CD4-positive, alpha-beta memory T cell (primary cell): ENCODE measurements at regions of chr1 and their contacts with region 1.

Region 1: DNA sequence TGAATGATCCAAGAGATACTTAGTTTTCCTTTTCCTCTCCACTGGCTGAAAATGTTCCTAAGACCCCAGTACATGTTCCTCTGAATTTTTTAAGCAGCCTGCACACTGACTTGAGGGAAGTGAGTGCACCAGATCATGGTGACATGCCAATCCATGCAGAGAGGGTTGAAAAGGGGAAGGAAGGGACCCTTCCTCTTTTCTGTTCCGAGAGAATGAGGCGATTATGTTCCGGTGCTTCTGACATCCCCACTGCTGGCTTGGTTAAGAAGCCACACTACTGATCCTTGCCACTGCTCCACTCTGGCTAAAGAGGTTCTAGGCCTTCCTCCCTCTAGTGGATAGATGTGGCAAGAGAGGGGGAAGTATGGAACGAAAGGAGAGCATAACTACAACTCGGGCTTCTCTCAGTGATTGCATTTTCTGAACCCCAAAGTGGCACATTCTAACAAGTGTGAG is 1.8 kb upstream of the CYB5R1 start:
- DNase-seq: peak; percentile 21 to 59 (median 29)
- H3K4me3 ChIP-seq: no peak overlapping the region
- H3K4me3 Mint-ChIP-seq: peak overlapping the region in 5 of 8 donors; percentile 9 to 68 (median 35)
- H3K27ac ChIP-seq: peak overlapping the region; percentile 52
- H3K27ac Mint-ChIP-seq: peak overlapping the region; percentile 3 to 87 (median 75)
- H3K4me1 ChIP-seq: peaks cover 29% of the 10 kb centered on the region
- H3K4me1 Mint-ChIP-seq: peaks cover 14 to 36% (median 22%) of the 10 kb centered on the region in 4 donors
- H3K27me3 ChIP-seq: no peaks in the 10 kb centered on the region
- H3K27me3 Mint-ChIP-seq: no peaks in the 10 kb centered on the region

Region 2: DNA sequence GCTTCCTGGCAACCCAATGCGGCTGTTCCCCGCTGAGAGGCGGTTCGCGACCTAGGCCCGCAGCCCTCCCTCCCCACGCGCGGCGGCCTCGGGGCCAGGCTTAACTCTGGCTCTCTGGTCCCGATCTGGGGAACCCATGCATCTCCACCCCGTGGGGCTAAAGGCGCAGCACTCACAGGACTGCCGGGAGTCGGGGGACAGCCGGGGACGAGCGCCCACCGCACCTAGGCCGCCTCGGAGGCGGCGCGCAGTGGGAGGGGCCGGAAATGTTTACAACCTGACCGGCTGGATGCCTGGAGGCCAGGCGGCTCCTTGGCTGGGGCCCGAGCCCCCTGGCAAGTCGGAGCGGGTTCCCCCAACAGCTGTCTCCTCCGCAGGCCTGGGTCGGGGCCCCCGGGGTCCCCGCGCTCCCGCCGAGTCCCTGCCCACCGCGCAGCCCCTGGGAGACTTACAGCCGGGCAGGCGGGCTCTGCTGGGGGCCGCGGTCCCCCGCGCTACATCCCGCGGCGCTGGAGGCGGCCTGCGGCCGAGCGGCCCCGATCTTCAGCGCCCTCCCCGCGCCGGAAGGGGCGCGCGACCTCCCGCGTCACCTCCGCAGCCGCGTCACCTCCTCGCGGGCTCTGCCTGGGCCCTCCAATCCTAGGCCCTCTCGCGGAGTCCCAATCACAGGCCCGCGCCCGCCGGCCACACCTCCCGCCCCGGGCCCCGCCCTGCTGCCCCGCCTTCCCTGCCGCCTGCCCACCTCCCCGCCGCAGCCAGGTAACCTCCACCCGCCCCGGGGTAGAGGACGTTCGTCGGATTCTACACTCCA is 10.9 kb before region 1 on chr1 and contains the start of gene ADIPOR1:
- CTCF ChIA-PET with region 1: interaction called, 9 read pairs
- POLR2A ChIA-PET with region 1: interaction called, 6 read pairs
- intact Hi-C with region 1: loop called (anchors 1 kb)
- DNase-seq: peak; percentile 93 to 94 (median 94)
- H3K4me3 ChIP-seq: peak within 1 kb of the TSS; percentile 44 to 78
- H3K4me3 Mint-ChIP-seq: peak within 1 kb of the TSS; percentile 89 to 97 (median 94)
- H3K27ac ChIP-seq: peak within 1 kb of the TSS; percentile 94
- H3K27ac Mint-ChIP-seq: peak within 1 kb of the TSS; percentile 91 to 99 (median 97)
- H3K4me1 ChIP-seq: peaks cover 54% of the 10 kb centered on the region
- H3K4me1 Mint-ChIP-seq: peaks cover 30 to 55% (median 47%) of the 10 kb centered on the region in 4 donors
- H3K27me3 ChIP-seq: no peaks in the 10 kb centered on the region
- H3K27me3 Mint-ChIP-seq: no peaks in the 10 kb centered on the region
- total RNA-seq, gene ADIPOR1: 52.6 to 58.3 TPM

Region 3: GRCh38 chr1:202998836-202999750 is 30.2 kb after region 1 on chr1:
- CTCF ChIA-PET with region 1: interaction called, 12 read pairs
- POLR2A ChIA-PET with region 1: no interaction called
- intact Hi-C with region 1: loop called (anchors 2 kb)
- DNase-seq: peak; percentile 57 to 69 (median 64)
- H3K4me3 ChIP-seq: no peak overlapping the region
- H3K4me3 Mint-ChIP-seq: peak overlapping the region in 5 of 8 donors; percentile 1 to 52 (median 11)
- H3K27ac ChIP-seq: no peak overlapping the region
- H3K27ac Mint-ChIP-seq: peak overlapping the region in 1 of 7 donors; percentile 10
- H3K4me1 ChIP-seq: peaks cover 4% of the 10 kb centered on the region
- H3K4me1 Mint-ChIP-seq: peaks cover 5 to 12% (median 6%) of the 10 kb centered on the region in 4 donors
- H3K27me3 ChIP-seq: peaks cover 7% of the 10 kb centered on the region
- H3K27me3 Mint-ChIP-seq: peaks cover 15 to 16% of the 10 kb centered on the region in 2 donors

Region 4: DNA sequence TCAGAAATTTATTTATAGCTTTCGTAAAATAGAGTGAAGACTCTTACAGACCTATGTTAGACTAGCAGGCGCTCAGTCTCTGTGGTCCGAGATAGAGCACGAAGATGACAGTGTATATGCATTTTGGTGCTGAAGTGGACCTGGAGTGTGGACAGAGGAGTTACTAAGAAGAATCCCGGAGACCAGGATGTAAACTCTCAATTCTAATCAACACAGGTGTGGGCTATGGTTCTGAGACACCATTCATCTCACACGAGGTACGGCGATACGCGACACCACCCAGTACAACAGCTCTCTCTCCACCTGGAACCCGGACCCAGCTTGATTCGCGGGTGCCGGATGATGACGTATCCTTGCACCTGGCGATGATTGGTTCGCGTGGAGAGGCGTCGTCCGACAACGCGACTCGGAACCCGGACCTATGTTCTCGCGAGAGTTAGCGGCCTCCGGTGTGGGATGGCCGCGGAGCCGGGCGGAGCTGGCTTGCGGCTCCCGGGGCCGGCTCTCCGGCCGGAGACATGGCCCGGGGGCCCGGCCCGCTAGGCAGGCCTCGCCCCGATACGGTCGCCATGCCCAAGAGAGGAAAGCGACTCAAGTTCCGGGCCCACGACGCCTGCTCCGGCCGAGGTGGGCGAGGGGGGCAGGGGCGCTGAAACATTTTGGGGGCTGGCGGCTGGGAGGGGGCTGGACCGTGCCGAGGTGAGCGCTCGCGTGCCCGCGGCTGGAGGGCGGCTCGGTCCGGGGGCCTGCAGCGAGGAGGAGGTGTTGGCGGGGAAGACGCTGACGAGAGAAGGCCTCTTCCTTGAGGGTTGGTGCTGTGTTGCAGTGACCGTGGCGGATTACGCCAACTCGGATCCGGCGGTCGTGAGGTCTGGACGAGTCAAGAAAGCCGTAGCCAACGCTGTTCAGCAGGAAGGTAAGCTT is 38.3 kb after region 1 on chr1 and contains the start of gene TMEM183A:
- CTCF ChIA-PET with region 1: interaction called, 3 read pairs
- POLR2A ChIA-PET with region 1: interaction called, 24 read pairs
- intact Hi-C with region 1: no loop called
- DNase-seq: peak; percentile 92 to 96 (median 93)
- H3K4me3 ChIP-seq: peak within 1 kb of the TSS; percentile 75 to 97
- H3K4me3 Mint-ChIP-seq: peak within 1 kb of the TSS; percentile 91 to 99 (median 94)
- H3K27ac ChIP-seq: peak within 1 kb of the TSS; percentile 93
- H3K27ac Mint-ChIP-seq: peak within 1 kb of the TSS; percentile 97 to 99 (median 98)
- H3K4me1 ChIP-seq: peaks cover 32% of the 10 kb centered on the region
- H3K4me1 Mint-ChIP-seq: peaks cover 18 to 46% (median 33%) of the 10 kb centered on the region in 4 donors
- H3K27me3 ChIP-seq: no peaks in the 10 kb centered on the region
- H3K27me3 Mint-ChIP-seq: no peaks in the 10 kb centered on the region
- total RNA-seq, gene TMEM183A: 69.3 to 70.3 TPM

Region 5: DNA sequence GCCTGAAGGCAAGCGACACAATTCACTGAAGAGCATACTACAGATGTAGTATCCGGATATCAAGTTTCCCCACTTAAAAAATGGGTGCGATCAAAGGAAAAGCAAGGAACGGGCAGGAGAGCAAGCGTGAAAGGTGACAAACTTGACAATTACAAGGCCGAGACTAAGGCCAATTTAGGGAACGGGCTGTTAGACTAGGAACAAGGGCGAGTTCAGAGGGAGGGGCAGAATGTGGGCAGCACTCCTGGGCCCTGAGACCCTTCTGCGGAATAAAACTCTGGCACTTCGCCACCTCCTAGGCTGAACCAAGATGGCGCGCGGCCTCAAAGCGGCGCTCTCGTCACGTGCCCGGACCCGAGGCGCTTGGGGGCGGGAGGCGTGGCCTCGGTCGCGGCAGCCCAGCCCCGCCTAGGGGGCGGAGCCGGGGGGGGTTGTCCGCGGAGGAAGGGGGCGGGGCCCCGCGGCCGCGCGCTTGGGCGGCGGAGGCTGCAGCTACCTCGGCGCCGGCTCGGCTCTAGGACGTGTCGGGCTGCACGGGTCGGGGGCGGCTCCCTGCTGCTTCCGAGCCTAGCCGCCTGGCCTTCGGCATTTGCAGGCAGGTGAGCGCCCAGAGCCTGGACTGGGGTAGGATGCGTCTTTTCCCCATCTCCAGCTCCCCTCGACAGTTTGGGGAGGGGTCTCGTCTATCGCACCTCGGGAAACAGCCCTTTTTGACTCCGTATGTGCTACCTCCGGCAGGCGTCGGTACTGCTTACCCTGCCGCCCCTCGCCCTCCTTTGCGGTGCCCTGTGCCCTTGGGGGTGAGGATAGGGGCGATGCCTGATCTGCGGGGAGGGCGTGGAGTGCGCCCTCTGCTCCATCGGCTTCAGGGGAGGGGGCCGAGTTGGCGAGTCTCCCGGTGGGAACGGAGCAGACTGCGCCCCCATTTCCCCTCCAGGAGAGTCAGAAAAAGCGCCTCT is 57.4 kb after region 1 on chr1 and contains the start of gene PPFIA4:
- CTCF ChIA-PET with region 1: no interaction called
- POLR2A ChIA-PET with region 1: interaction called, 5 read pairs
- intact Hi-C with region 1: loop called (anchors 5 kb)
- DNase-seq: peak; percentile 76 to 90 (median 85)
- H3K4me3 ChIP-seq: peak within 1 kb of the TSS; percentile 60 to 81
- H3K4me3 Mint-ChIP-seq: peak within 1 kb of the TSS; percentile 79 to 86 (median 81)
- H3K27ac ChIP-seq: peak within 1 kb of the TSS; percentile 46
- H3K27ac Mint-ChIP-seq: peak within 1 kb of the TSS; percentile 65 to 90 (median 80)
- H3K4me1 ChIP-seq: peaks cover 13% of the 10 kb centered on the region
- H3K4me1 Mint-ChIP-seq: peaks cover 4 to 16% (median 11%) of the 10 kb centered on the region in 4 donors
- H3K27me3 ChIP-seq: no peaks in the 10 kb centered on the region
- H3K27me3 Mint-ChIP-seq: peaks cover 0 to 2% of the 10 kb centered on the region in 2 donors
- total RNA-seq, gene PPFIA4: 1.4 to 1.5 TPM

Region 6: DNA sequence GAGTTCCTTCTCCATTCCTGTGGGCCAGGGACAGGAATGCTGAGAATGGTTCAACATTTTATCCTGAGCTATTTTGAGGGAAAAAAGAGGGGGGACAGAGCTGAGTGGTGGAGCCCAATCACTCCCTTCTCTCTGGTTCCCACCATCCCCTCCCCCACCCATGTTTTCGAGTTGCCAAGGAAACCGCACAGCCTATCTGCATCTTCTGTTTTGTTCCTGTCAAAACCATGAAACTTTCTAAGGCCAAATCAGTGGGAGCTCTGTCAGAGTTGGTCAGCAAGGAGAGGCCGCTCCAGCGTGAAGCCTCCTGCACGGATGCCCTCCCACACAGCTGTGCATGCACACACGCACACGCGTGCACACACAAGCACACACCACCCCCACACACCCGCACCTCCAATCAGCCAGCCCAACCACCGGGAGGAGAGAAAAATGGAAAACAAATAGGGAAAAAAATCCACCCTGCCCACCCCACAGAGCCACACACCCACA is 603.3 kb after region 1 on chr1:
- CTCF ChIA-PET with region 1: no interaction called
- POLR2A ChIA-PET with region 1: no interaction called
- intact Hi-C with region 1: no loop called
- DNase-seq: no peak
- H3K4me3 ChIP-seq: no peak overlapping the region
- H3K4me3 Mint-ChIP-seq: no peak overlapping the region
- H3K27ac ChIP-seq: no peak overlapping the region
- H3K27ac Mint-ChIP-seq: no peak overlapping the region
- H3K4me1 ChIP-seq: no peaks in the 10 kb centered on the region
- H3K4me1 Mint-ChIP-seq: no peaks in the 10 kb centered on the region
- H3K27me3 ChIP-seq: no peaks in the 10 kb centered on the region
- H3K27me3 Mint-ChIP-seq: peaks cover 0 to 3% of the 10 kb centered on the region in 2 donors